HepG2 (cell line): ENCODE measurements at regions of chr2 and their contacts with region 1.

Region 1: GRCh38 chr2:96509114-96509846 is 4.1 kb upstream of the NEURL3 start:
- DNase-seq: peak; percentile 78
- ATAC-seq: peak; percentile 79
- H3K4me3 ChIP-seq: peak overlapping the region in 1 of 3 experiments; percentile 36; a peak in 1 of 6 replicates
- H3K27ac ChIP-seq: no peak overlapping the region
- H3K4me1 ChIP-seq: peaks cover 51% of the 10 kb centered on the region
- H3K27me3 ChIP-seq: peaks cover 0 to 37% of the 10 kb centered on the region in 2 experiments; a peak in 3 of 5 replicates
- CTCF ChIP-seq: peak; percentile 100
- EP300 ChIP-seq: no peak; a peak in 1 of 4 replicates
- POLR2A ChIP-seq: no peak
- RAD21 ChIP-seq: peak; percentile 100

Region 2: GRCh38 chr2:96145036-96145847 is 364.0 kb before region 1 on chr2 and contains the start of gene DUSP2:
- CTCF ChIA-PET with region 1: no interaction called
- POLR2A ChIA-PET with region 1: no interaction called
- in situ Hi-C with region 1: loop called (anchors 25 kb)
- intact Hi-C with region 1: no loop called
- DNase-seq: no peak
- ATAC-seq: no peak
- H3K4me3 ChIP-seq: peak within 1 kb of the TSS in 1 of 3 experiments; percentile 17; a peak in 1 of 6 replicates
- H3K27ac ChIP-seq: no peak within 1 kb of the TSS
- H3K4me1 ChIP-seq: peaks cover 15% of the 10 kb centered on the region
- H3K27me3 ChIP-seq: peaks cover 11 to 67% of the 10 kb centered on the region in 2 experiments; a peak in 4 of 5 replicates
- CTCF ChIP-seq: no peak
- EP300 ChIP-seq: no peak
- POLR2A ChIP-seq: no peak
- RAD21 ChIP-seq: no peak
- total RNA-seq, gene DUSP2: not detected in 2 replicates

Region 3: GRCh38 chr2:96265840-96266679 is 243.2 kb before region 1 on chr2 and contains the starts of genes CIAO1 and TMEM127:
- CTCF ChIA-PET with region 1: no interaction called
- POLR2A ChIA-PET with region 1: no interaction called
- in situ Hi-C with region 1: no loop called
- intact Hi-C with region 1: loop called (anchors 2 kb)
- DNase-seq: peak; percentile 98
- ATAC-seq: peak; percentile 90
- H3K4me3 ChIP-seq: peak within 1 kb of the TSS; percentile 95 to 97 (median 96)
- H3K27ac ChIP-seq: peak within 1 kb of the TSS; percentile 83
- H3K4me1 ChIP-seq: peaks cover 47% of the 10 kb centered on the region
- H3K27me3 ChIP-seq: no peaks in the 10 kb centered on the region; a peak in 1 of 5 replicates
- CTCF ChIP-seq: peak; percentile 58
- EP300 ChIP-seq: peak in 1 of 2 experiments; percentile 65; a peak in 2 of 4 replicates
- POLR2A ChIP-seq: peak in 1 of 2 experiments; percentile 84; a peak in 2 of 4 replicates
- RAD21 ChIP-seq: peak; percentile 67; the same call in 1 of the 2 replicates
- total RNA-seq, gene CIAO1: 99.3 and 118 TPM in 2 replicates
- total RNA-seq, gene TMEM127: 15.7 and 21.5 TPM in 2 replicates

Region 4: GRCh38 chr2:96407041-96407918 is 102.0 kb before region 1 on chr2:
- CTCF ChIA-PET with region 1: interaction called, 116 read pairs
- POLR2A ChIA-PET with region 1: interaction called, 15 read pairs
- in situ Hi-C with region 1: loop called (anchors 5 kb)
- intact Hi-C with region 1: loop called (anchors 1 kb)
- DNase-seq: peak; percentile 77
- ATAC-seq: peak; percentile 83
- H3K4me3 ChIP-seq: peak overlapping the region in 1 of 3 experiments; percentile 56; a peak in 2 of 6 replicates
- H3K27ac ChIP-seq: no peak overlapping the region
- H3K4me1 ChIP-seq: peaks cover 53% of the 10 kb centered on the region
- H3K27me3 ChIP-seq: peaks cover 2 to 29% of the 10 kb centered on the region in 2 experiments; a peak in 3 of 5 replicates
- CTCF ChIP-seq: peak; percentile 97
- EP300 ChIP-seq: peak in 1 of 2 experiments; percentile 18; a peak in 1 of 4 replicates
- POLR2A ChIP-seq: no peak
- RAD21 ChIP-seq: peak; percentile 86

Region 5: DNA sequence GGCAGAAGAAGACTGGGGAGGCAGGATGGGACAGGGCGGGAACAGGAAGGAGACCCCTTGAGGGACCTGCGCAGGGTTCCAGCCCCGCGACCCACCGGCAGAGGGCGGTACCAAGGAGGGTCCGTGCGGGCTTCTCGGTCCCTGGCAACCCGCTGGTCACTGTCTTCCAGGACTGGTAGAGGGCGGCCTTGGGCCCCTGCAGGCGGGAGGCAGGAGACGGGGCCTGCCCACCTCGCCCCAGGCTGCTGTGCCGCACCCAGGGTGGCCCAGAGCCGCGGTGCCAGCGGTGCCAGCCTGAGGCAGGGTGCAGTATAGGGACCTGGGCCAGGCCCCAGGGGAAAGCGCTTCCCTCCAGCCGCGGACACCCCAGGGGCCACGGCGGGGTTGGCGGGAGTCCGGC is 38.6 kb before region 1 on chr2:
- CTCF ChIA-PET with region 1: interaction called, 8 read pairs
- POLR2A ChIA-PET with region 1: no interaction called
- in situ Hi-C with region 1: no loop called
- intact Hi-C with region 1: loop called (anchors 2 kb)
- DNase-seq: no peak
- ATAC-seq: peak; percentile 92
- H3K4me3 ChIP-seq: no peak overlapping the region
- H3K27ac ChIP-seq: no peak overlapping the region
- H3K4me1 ChIP-seq: no peaks in the 10 kb centered on the region
- H3K27me3 ChIP-seq: peaks cover 0 to 16% of the 10 kb centered on the region in 2 experiments; a peak in 3 of 5 replicates
- CTCF ChIP-seq: peak; percentile 74
- EP300 ChIP-seq: no peak
- POLR2A ChIP-seq: no peak
- RAD21 ChIP-seq: peak; percentile 59

Region 6: DNA sequence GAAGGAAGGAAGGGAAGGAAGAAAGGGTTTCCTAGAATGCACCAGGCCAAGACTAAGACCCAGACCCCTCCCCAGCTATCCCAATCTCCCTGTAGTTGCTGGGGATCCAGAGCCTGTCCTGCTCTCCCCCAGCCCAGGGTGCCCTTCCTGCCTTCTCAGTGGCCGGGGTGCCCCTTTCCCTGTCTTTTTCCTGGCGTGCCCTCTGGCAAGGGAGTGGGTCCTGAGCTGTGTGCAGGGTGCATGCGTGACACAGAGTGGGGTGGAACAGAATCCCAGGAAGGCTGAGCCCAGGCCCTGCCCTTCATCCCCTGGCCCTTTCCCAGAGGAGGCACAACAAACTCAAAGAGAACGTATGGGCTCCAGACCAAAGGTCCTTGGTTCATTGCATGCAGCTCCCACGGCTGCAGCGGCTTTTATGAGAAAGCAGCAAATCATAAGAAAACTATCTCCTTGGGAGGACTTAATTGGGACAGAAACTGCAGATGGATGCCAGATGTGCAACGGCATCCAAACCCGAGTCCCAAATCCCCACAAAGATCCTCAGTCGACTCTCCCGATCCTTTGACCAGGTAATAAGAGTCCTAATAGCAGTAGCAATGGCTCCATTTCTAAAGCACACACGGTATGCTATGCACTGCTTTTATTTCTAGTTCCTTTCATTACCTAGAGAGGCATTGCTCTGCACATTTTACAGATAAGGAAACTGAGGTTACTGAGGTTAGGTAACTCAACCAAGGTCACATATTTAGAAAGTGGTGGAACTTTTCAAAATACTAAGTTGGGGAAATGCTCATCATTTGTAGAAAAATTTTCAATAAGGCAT is 14.6 kb after region 1 on chr2:
- CTCF ChIA-PET with region 1: no interaction called
- POLR2A ChIA-PET with region 1: no interaction called
- in situ Hi-C with region 1: no loop called
- intact Hi-C with region 1: no loop called
- DNase-seq: no peak
- ATAC-seq: peak; percentile 38
- H3K4me3 ChIP-seq: no peak overlapping the region
- H3K27ac ChIP-seq: no peak overlapping the region
- H3K4me1 ChIP-seq: no peaks in the 10 kb centered on the region
- H3K27me3 ChIP-seq: peaks cover 6 to 46% of the 10 kb centered on the region in 2 experiments
- CTCF ChIP-seq: no peak
- EP300 ChIP-seq: no peak
- POLR2A ChIP-seq: no peak
- RAD21 ChIP-seq: no peak